K562 (cell line): ENCODE measurements at regions of chr5 and their contacts with region 1.

Region 1: DNA sequence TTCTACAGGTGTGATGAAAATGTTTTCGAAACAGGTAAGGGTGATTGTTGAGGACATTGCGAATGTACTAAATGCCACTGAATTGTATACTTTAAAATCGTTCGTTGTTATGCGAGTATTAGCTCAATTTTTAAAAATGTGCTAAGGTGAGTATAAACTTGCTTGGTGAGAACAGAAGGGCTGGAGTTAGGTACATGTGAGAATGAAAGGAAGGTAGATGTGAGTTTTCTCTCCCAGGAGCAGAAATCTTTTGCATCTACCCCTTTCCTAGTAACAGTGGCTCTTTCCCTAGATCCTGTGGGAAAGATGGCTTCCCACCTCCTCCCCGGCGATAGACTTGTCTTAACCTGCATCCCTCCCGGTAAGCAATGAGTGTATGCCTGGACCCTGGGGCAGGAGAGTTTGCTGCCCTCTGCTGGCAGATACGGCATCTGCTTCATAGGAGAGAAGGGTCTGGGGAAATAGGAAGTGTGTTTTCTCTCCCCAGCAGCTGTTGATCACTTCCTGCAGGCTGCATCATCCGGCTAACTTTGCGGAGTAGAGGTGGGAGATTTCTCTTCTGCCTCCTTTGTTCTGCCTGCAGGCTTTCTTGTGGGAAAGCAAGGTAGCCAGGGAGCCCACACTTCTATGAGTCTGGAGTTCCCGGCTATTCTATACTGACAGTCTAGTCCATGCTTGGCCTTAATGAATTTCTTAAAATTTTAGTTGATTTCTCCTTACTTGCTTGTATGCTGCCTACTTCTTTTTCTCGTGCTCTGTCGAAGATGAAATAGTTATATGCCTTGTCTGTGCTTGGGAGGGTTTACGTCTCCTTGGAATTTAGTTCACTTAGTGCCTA is 373.3 kb upstream of the SEMA6A start:
- DNase-seq: peak; percentile 37 to 59 (median 54)
- ATAC-seq: peak; percentile 94
- H3K4me3 ChIP-seq: no peak overlapping the region
- H3K27ac ChIP-seq: no peak overlapping the region
- H3K4me1 ChIP-seq: no peaks in the 10 kb centered on the region
- H3K27me3 ChIP-seq: no peaks in the 10 kb centered on the region
- CTCF ChIP-seq: peak; percentile 49 to 70 (median 54)
- EP300 ChIP-seq: no peak
- POLR2A ChIP-seq: no peak
- RAD21 ChIP-seq: peak; percentile 19 to 58; a peak in 3 of 4 replicates

Region 2: GRCh38 chr5:116574367-116575325 is 373.3 kb before region 1 on chr5 and contains the start of gene SEMA6A:
- CTCF ChIA-PET with region 1: no interaction called
- POLR2A ChIA-PET with region 1: no interaction called
- in situ Hi-C with region 1: no loop called
- intact Hi-C with region 1: loop called (anchors 5 kb)
- DNase-seq: peak in 3 of 4 experiments; percentile 6 to 22 (median 18)
- ATAC-seq: peak; percentile 67
- H3K4me3 ChIP-seq: no peak within 1 kb of the TSS
- H3K27ac ChIP-seq: no peak within 1 kb of the TSS
- H3K4me1 ChIP-seq: peaks cover 0 to 14% of the 10 kb centered on the region in 2 experiments; a peak in 2 of 5 replicates
- H3K27me3 ChIP-seq: peaks cover 5 to 23% of the 10 kb centered on the region in 2 experiments; a peak in 3 of 5 replicates
- CTCF ChIP-seq: no peak
- EP300 ChIP-seq: no peak
- POLR2A ChIP-seq: no peak
- RAD21 ChIP-seq: no peak
- polyA plus RNA-seq, gene SEMA6A: 0.04 to 0.10 TPM

Region 3: GRCh38 chr5:117072439-117072838 is 124.5 kb after region 1 on chr5:
- CTCF ChIA-PET with region 1: no interaction called
- POLR2A ChIA-PET with region 1: no interaction called
- in situ Hi-C with region 1: no loop called
- intact Hi-C with region 1: no loop called
- DNase-seq: no peak
- ATAC-seq: no peak
- H3K4me3 ChIP-seq: no peak overlapping the region
- H3K27ac ChIP-seq: no peak overlapping the region
- H3K4me1 ChIP-seq: no peaks in the 10 kb centered on the region
- H3K27me3 ChIP-seq: no peaks in the 10 kb centered on the region
- CTCF ChIP-seq: no peak
- EP300 ChIP-seq: no peak
- POLR2A ChIP-seq: no peak
- RAD21 ChIP-seq: no peak